HepG2 (cell line): ENCODE measurements at regions of chr4 and their contacts with region 1.

Region 1: DNA sequence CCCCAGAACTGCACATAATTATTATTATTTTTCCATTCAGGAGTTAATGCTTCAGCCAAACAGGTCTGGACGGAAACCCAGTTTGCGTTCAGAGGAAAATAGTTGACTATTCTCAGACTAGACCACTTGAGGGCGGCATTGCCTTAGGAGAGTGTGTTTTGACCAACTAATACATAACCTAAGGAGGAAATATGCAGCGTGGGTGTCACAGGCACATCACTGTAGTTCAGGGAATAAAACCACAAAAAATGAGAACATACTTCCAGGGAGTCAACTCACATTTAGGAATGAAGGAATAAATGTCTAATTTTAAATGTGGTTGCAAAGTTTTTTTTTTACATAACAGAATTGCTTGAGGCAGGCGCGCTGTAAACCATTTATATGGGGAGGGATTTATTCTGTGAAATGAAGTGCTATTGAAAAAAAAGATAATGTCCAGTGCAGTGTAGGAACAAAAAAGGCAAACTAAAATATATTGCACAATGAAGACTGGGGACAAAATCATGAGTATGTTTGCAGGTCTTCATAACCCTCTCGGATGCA is 93.3 kb downstream of the SYNPO2 start:
- DNase-seq: peak; percentile 56
- ATAC-seq: peak; percentile 94
- H3K4me3 ChIP-seq: no peak overlapping the region
- H3K27ac ChIP-seq: no peak overlapping the region
- H3K4me1 ChIP-seq: no peaks in the 10 kb centered on the region
- H3K27me3 ChIP-seq: peaks cover 0 to 3% of the 10 kb centered on the region in 2 experiments; a peak in 1 of 5 replicates
- CTCF ChIP-seq: peak; percentile 86
- EP300 ChIP-seq: no peak
- POLR2A ChIP-seq: no peak
- RAD21 ChIP-seq: peak; percentile 78

Region 2: DNA sequence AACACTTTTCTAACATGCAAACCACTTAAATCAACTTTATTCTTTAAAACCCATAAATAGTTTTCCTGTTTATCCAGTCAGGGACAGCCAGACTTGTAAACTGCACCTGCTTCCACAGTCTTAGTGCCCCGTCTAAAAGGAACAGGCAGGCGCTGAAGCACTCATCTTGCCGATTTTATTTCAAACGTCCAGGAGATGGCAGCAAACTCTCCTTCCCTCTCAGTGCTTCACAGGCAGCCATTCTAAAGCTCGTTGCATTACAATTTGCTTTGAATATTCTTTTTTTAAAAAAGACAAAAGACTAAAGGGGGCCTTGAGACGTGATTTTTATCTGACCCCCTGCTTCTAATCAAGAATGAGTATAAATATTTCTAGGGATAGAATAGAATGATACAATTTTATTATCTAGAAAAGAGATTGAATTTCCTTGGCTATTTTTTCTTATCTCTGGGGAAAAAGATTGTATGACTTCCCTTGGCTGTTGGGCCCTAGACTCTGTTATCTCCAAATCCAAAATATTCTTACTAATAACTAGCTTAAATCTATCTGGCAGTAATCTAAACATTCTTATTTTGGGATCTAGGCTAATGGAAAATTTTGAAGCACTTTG is 60.1 kb after region 1 on chr4:
- CTCF ChIA-PET with region 1: no interaction called
- POLR2A ChIA-PET with region 1: no interaction called
- in situ Hi-C with region 1: no loop called
- intact Hi-C with region 1: loop called (anchors 1 kb)
- DNase-seq: peak; percentile 66
- ATAC-seq: peak; percentile 96
- H3K4me3 ChIP-seq: no peak overlapping the region
- H3K27ac ChIP-seq: no peak overlapping the region
- H3K4me1 ChIP-seq: no peaks in the 10 kb centered on the region
- H3K27me3 ChIP-seq: 0 out of 5 replicates have a peak, but pooled peaks cover 0 to 4% of the 10 kb centered on the region in 2 experiments
- CTCF ChIP-seq: peak; percentile 80
- EP300 ChIP-seq: no peak
- POLR2A ChIP-seq: no peak
- RAD21 ChIP-seq: peak; percentile 66

Region 3: DNA sequence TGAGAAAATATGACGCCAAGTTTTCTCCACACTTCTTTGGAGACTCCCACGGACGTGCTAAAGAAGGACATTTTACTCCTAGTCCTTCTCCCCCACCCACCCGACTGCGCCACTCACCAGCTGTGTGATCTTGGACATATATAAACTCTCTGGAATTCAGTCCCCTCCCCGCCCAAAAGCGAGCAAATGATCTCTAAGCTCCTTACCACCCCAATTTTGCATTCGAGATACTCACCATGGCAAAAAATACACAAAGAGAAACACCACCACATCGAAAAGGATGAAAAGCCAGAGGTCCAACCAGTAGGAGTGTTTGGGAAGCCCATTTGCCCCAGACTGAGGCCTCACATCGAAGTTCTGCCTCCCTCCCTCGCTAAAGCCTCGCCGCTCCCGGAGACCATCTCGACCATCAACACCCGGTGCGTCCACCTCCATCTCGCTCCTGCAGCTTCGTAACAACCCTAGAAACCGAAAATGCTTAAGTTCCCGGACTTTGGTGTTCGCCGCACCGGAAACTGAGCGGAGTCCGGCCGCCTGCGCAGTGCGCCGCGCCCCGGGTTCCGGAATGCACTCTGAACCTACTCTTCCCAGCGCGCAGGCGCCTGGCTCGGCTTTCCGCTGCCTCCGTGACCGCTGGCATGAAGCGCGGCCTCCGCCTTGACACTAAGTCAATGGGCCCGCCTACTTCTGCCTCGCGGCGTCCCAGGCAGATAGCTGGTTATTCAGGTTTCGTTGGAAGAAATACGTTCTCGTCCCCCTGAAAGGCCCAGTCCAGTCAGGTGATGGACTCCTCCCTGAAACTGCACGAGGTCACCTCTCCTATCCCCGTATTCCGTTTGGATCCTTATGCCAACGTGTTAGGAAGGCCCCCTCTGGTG is 318.4 kb after region 1 on chr4:
- CTCF ChIA-PET with region 1: no interaction called
- POLR2A ChIA-PET with region 1: no interaction called
- in situ Hi-C with region 1: loop called (anchors 10 kb)
- intact Hi-C with region 1: loop called (anchors 5 kb)
- DNase-seq: peak; percentile 96
- ATAC-seq: peak; percentile 96
- H3K4me3 ChIP-seq: peak overlapping the region; percentile 85 to 100 (median 91)
- H3K27ac ChIP-seq: peak overlapping the region; percentile 89
- H3K4me1 ChIP-seq: peaks cover 66% of the 10 kb centered on the region
- H3K27me3 ChIP-seq: peaks cover 0 to 9% of the 10 kb centered on the region in 2 experiments; a peak in 2 of 5 replicates
- CTCF ChIP-seq: peak; percentile 53
- EP300 ChIP-seq: peak in 1 of 2 experiments; percentile 48; a peak in 2 of 4 replicates
- POLR2A ChIP-seq: peak; percentile 81 to 87
- RAD21 ChIP-seq: no peak

Region 4: DNA sequence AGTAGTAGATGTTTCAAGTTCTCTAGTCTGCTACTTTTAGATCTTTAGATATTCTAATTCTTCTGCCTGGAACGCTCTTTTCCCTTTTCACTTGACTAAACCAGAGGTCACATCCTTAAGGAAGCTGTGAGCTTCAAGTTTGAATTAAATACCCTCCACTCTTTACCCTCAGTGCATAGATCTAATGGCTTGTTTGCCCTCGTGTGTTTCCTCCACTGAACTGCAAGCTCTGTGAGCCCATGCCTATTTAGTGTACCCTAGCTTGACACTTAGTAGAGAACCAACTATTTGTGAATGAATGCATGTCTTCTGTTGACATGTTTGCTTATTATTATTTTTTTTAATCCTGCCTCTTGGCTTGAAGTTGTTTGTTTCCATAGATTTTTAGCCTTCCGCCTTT is 508.4 kb after region 1 on chr4:
- CTCF ChIA-PET with region 1: no interaction called
- POLR2A ChIA-PET with region 1: no interaction called
- in situ Hi-C with region 1: loop called (anchors 25 kb)
- intact Hi-C with region 1: no loop called
- DNase-seq: no peak
- ATAC-seq: peak; percentile 84
- H3K4me3 ChIP-seq: no peak overlapping the region
- H3K27ac ChIP-seq: no peak overlapping the region
- H3K4me1 ChIP-seq: no peaks in the 10 kb centered on the region
- H3K27me3 ChIP-seq: no peaks in the 10 kb centered on the region
- CTCF ChIP-seq: peak; percentile 33; the same call in 1 of the 2 replicates
- EP300 ChIP-seq: no peak
- POLR2A ChIP-seq: no peak
- RAD21 ChIP-seq: no peak

Region 5: GRCh38 chr4:120049732-120050494 is 1068.0 kb after region 1 on chr4:
- CTCF ChIA-PET with region 1: interaction called, 4 read pairs
- POLR2A ChIA-PET with region 1: no interaction called
- in situ Hi-C with region 1: loop called (anchors 10 kb)
- intact Hi-C with region 1: loop called (anchors 2 kb)
- DNase-seq: peak; percentile 62
- ATAC-seq: peak; percentile 99
- H3K4me3 ChIP-seq: no peak overlapping the region
- H3K27ac ChIP-seq: no peak overlapping the region
- H3K4me1 ChIP-seq: no peaks in the 10 kb centered on the region
- H3K27me3 ChIP-seq: no peaks in the 10 kb centered on the region
- CTCF ChIP-seq: peak; percentile 91
- EP300 ChIP-seq: no peak
- POLR2A ChIP-seq: no peak
- RAD21 ChIP-seq: peak; percentile 67